T-cell (primary cell): ENCODE measurements at regions of chr2 and their contacts with region 1.

Region 1: DNA sequence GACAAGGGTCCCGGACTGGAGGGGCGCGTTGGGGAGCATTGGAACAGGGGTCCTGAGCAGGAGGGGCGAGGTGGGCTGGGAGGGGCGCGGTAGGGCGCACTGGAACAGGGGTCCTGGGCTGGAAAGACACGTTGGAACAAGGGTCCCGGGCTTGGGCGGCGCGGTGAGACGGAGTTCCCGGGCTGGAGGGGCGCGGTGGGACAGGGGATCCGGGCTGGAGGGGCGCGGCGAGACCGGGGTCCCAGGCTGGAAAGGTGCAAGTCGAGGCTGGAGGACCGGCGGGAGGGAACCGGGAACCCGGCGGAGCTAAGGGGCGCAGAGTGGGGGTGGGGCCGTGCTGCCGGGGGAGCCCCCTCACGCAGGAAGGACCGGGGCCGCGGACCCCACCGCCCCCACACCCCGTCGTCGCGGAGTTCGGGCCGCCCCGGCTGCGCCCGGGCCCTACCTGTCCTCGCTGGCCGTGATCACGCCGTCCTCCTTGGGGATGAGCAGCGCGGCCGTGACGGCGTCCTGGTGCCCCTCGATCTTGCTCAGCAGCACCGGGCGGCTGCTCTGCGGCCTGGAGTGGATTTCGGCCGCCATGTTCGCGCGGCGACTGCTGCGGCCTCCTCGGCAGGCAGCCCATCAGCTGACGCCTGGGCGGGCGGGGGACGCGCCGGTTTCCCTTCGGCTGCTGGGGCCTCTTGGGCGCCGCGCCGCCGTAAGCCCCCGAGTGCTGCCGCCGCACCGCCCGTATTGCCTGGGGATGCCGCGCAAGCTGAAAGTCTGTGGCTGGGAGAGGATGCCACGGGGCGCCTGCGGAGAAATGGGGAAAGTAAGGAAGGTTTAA is at the start of gene WDFY1:
- DNase-seq: peak; percentile 60 to 84 (median 70)
- ATAC-seq: peak; percentile 91 to 95 (median 93)
- H3K4me3 ChIP-seq: peak within 1 kb of the TSS; percentile 71 to 92
- H3K4me3 Mint-ChIP-seq: peak within 1 kb of the TSS; percentile 90 to 95 (median 91)
- H3K27ac ChIP-seq: peak within 1 kb of the TSS; percentile 21
- H3K27ac Mint-ChIP-seq: peak within 1 kb of the TSS; percentile 81 to 86
- H3K4me1 ChIP-seq: peaks cover 7 to 44% of the 10 kb centered on the region in 2 experiments
- H3K4me1 Mint-ChIP-seq: peaks cover 56 to 59% (median 57%) of the 10 kb centered on the region in 3 donors
- H3K27me3 ChIP-seq: no peaks in the 10 kb centered on the region
- H3K27me3 Mint-ChIP-seq: no peaks in the 10 kb centered on the region
- total RNA-seq, gene WDFY1: 27.5 to 45.2 (median 36.6) TPM

Region 2: DNA sequence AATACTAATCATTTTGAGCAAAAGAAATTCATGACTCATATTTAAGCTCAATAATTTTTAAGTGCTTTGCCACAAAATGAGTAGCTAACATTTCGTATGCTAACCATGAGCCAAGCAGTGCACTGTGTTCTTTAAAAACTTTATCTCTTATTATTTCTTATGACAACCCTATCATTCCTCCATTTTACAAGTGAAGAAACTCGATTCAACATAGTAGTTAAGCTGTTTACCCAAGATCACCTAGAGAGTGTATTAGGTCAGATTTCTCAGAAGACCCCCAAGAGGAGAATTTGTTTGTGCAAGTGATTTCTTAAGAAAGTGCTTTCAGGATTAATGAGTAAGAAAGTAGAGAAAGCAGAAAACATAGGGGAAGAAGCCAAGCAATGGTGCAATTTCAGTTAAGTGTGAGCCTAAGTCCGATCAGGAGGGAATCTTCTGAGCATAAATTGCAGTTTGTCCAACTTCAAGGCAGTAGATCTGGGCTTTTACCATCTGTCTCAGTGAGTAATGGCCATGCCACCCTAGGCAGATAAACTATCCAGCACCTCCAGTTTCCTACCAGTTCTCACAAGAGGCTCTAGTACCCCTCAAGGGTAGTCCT is 545.5 kb before region 1 on chr2:
- CTCF ChIA-PET with region 1: no interaction called
- POLR2A ChIA-PET with region 1: no interaction called
- DNase-seq: no peak
- ATAC-seq: no peak
- H3K4me3 ChIP-seq: no peak overlapping the region
- H3K4me3 Mint-ChIP-seq: no peak overlapping the region
- H3K27ac ChIP-seq: no peak overlapping the region
- H3K27ac Mint-ChIP-seq: no peak overlapping the region
- H3K4me1 ChIP-seq: no peaks in the 10 kb centered on the region
- H3K4me1 Mint-ChIP-seq: no peaks in the 10 kb centered on the region
- H3K27me3 ChIP-seq: no peaks in the 10 kb centered on the region
- H3K27me3 Mint-ChIP-seq: no peaks in the 10 kb centered on the region

Region 3: GRCh38 chr2:223580951-223581350 is 364.0 kb before region 1 on chr2:
- CTCF ChIA-PET with region 1: no interaction called
- POLR2A ChIA-PET with region 1: no interaction called
- DNase-seq: no peak
- ATAC-seq: no peak
- H3K4me3 ChIP-seq: no peak overlapping the region
- H3K4me3 Mint-ChIP-seq: no peak overlapping the region
- H3K27ac ChIP-seq: no peak overlapping the region
- H3K27ac Mint-ChIP-seq: no peak overlapping the region
- H3K4me1 ChIP-seq: no peaks in the 10 kb centered on the region
- H3K4me1 Mint-ChIP-seq: no peaks in the 10 kb centered on the region
- H3K27me3 ChIP-seq: peaks cover 0 to 4% of the 10 kb centered on the region in 2 experiments
- H3K27me3 Mint-ChIP-seq: peaks cover 1 to 17% of the 10 kb centered on the region in 2 donors

Region 4: GRCh38 chr2:224453892-224454291 is 509.0 kb after region 1 on chr2:
- CTCF ChIA-PET with region 1: no interaction called
- POLR2A ChIA-PET with region 1: interaction called in 1 of 2 experiments, 17 read pairs
- DNase-seq: no peak
- ATAC-seq: no peak
- H3K4me3 ChIP-seq: no peak overlapping the region
- H3K4me3 Mint-ChIP-seq: no peak overlapping the region
- H3K27ac ChIP-seq: no peak overlapping the region
- H3K27ac Mint-ChIP-seq: no peak overlapping the region
- H3K4me1 ChIP-seq: no peaks in the 10 kb centered on the region
- H3K4me1 Mint-ChIP-seq: no peaks in the 10 kb centered on the region
- H3K27me3 ChIP-seq: peaks cover 0 to 9% of the 10 kb centered on the region in 2 experiments
- H3K27me3 Mint-ChIP-seq: peaks cover 19 to 22% of the 10 kb centered on the region in 2 donors